ENCODE measurements at regions of chr18 and their contacts with region 1.

Region 1: GRCh38 chr18:74869904-74870863 is 272.5 kb downstream of the ZNF407 start:
- DNase-seq: no peak
- ATAC-seq: no peak
- H3K4me3 ChIP-seq: no peak overlapping the region
- H3K27ac ChIP-seq: no peak overlapping the region
- H3K4me1 ChIP-seq: peaks cover 2% of the 10 kb centered on the region
- H3K27me3 ChIP-seq: no peaks in the 10 kb centered on the region

Region 2: DNA sequence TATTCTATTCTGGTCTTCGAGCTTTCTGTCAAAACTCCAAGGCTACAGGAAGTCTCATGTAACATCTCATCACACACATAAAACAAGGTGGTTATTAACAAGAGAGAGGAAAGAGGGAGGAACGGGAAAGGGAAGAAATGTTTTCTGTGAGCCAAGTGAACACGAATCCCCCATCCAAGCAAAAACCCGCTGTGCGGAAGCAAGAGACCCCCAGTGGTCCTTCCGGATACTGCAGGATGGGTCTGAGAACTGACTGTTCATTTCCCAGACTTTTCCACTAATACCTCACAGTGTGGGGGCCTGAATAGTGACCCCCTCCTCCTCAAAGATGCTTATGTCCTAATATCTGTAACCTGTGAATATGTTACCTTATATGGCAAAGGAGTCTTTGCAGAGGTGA is 394.0 kb before region 1 on chr18:
- intact Hi-C with region 1: no loop called
- DNase-seq: peak in 1 of 3 donors; percentile 58
- ATAC-seq: no peak
- H3K4me3 ChIP-seq: no peak overlapping the region
- H3K27ac ChIP-seq: no peak overlapping the region
- H3K4me1 ChIP-seq: no peaks in the 10 kb centered on the region
- H3K27me3 ChIP-seq: no peaks in the 10 kb centered on the region

Region 3: DNA sequence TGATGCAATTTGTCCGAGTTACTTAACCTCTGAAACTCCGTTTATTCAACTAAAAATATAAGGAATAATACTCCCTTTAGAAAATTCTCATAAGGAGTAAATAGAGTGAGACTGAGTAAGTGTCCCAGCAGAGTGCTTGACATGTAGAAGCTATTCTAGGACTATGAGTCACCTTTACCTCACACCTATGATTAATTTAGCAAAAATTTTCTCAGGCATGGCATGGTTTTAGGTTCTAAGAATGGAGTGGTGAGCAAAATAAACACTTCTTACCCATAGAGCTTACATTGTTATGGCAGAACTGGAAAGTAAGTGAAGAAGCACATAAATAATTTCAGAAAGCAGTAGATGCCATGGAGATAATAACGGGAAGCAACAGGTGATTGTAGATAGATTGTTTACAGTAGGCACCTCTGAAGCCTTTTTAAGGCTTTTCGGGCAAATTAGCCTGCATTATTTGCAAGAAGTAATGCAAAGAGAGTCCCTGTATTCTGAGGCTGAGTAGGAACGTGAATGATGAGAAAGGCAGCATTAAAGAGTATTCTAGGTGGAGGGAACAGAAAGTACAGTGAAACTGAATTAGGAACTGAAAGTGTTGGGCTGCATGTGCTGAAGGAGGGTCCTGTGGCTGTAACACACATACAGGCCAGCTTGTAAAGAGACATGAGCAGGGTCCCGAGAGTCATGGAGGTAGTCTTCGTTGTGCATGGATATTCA is 63.3 kb before region 1 on chr18:
- intact Hi-C with region 1: loop called in 1 of 4 experiments (anchors 10 kb)
- DNase-seq: no peak
- ATAC-seq: peak; percentile 48 to 54
- H3K4me3 ChIP-seq: no peak overlapping the region
- H3K27ac ChIP-seq: no peak overlapping the region
- H3K4me1 ChIP-seq: no peaks in the 10 kb centered on the region
- H3K27me3 ChIP-seq: no peaks in the 10 kb centered on the region